MCF 10A (cell line): ENCODE measurements at regions of chr2 and their contacts with region 1.

Region 1: GRCh38 chr2:74715078-74715791 is 61.2 kb downstream of the SEMA4F start:
- DNase-seq: peak; percentile 84
- H3K4me3 Mint-ChIP-seq: peak overlapping the region; percentile 79
- H3K27ac Mint-ChIP-seq: no peak overlapping the region
- H3K4me1 Mint-ChIP-seq: no peaks in the 10 kb centered on the region
- H3K27me3 Mint-ChIP-seq: no peaks in the 10 kb centered on the region
- CTCF ChIP-seq: peak; percentile 73

Region 2: DNA sequence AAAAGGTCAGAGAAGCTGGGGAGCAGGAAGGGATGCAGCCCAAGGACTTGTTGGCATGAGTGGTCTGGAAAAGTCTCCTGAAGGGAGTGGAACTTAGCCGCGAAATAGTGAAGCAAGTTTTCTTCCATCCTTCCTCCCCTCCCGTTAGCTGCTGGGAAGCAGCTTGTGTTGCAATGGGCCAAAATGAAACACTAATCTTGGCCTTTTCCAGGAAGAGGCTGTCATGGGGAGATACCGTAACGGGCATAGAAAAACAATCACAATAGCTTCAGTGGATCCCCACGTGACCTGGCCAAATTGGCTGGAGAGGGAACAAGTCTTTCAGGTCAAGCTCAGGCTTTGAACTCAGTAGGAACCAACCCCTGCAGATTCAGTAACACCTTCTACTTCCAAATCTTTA is 11.9 kb before region 1 on chr2:
- CTCF ChIA-PET with region 1: interaction called, 43 read pairs
- POLR2A ChIA-PET with region 1: no interaction called
- intact Hi-C with region 1: no loop called
- DNase-seq: peak; percentile 53
- H3K4me3 Mint-ChIP-seq: no peak overlapping the region
- H3K27ac Mint-ChIP-seq: no peak overlapping the region
- H3K4me1 Mint-ChIP-seq: no peaks in the 10 kb centered on the region
- H3K27me3 Mint-ChIP-seq: peaks cover 24% of the 10 kb centered on the region
- CTCF ChIP-seq: no peak

Region 3: DNA sequence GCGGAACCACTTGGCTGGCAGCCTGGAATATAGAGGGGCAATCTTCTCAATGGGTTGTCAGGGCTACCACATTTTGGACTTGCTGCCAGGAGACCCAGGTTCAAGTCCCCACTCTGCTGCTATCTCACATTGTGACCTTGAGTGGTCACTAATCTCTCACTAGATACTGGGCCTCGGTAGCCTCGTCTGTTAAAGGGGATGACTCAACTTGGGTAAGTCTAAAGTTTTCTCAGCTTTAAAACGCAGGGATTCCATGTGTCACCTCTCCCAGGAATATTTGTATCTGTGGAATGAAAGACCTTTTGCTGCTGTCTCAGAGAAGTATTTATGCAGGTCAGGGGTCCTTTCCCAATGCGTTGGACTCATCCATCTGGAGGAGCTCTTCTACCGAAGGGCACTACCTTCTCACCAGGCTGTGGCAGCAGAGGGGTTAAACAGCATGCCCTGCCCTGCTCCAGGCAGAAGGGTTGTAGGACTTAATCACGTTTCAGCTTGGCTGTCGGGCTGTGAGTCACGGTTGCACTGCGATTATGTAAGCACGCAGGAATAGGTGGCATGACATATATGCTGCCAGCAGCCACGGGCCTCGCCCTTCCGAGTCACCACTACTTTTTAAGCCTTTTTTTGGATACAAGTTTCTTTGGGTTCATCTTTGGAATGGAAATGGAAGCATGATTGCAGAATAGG is 25.3 kb after region 1 on chr2:
- CTCF ChIA-PET with region 1: interaction called, 44 read pairs
- POLR2A ChIA-PET with region 1: interaction called, 36 read pairs
- intact Hi-C with region 1: no loop called
- DNase-seq: peak; percentile 98
- H3K4me3 Mint-ChIP-seq: peak overlapping the region; percentile 28
- H3K27ac Mint-ChIP-seq: peak overlapping the region; percentile 95
- H3K4me1 Mint-ChIP-seq: peaks cover 26% of the 10 kb centered on the region
- H3K27me3 Mint-ChIP-seq: no peaks in the 10 kb centered on the region
- CTCF ChIP-seq: no peak

Region 4: GRCh38 chr2:74845217-74846011 is 130.2 kb after region 1 on chr2:
- CTCF ChIA-PET with region 1: interaction called, 52 read pairs
- POLR2A ChIA-PET with region 1: interaction called, 4 read pairs
- intact Hi-C with region 1: no loop called
- DNase-seq: peak; percentile 96
- H3K4me3 Mint-ChIP-seq: peak overlapping the region; percentile 50
- H3K27ac Mint-ChIP-seq: peak overlapping the region; percentile 96
- H3K4me1 Mint-ChIP-seq: peaks cover 57% of the 10 kb centered on the region
- H3K27me3 Mint-ChIP-seq: no peaks in the 10 kb centered on the region
- CTCF ChIP-seq: no peak